ENCODE measurements at regions of chr3 and their contacts with region 1.

Region 1: GRCh38 chr3:33915791-33916546 is 117.5 kb downstream of the PDCD6IP start:
- DNase-seq: no peak
- ATAC-seq: no peak
- H3K4me3 ChIP-seq: no peak overlapping the region
- H3K4me3 Mint-ChIP-seq: no peak overlapping the region
- H3K27ac ChIP-seq: no peak overlapping the region
- H3K27ac Mint-ChIP-seq: no peak overlapping the region
- H3K4me1 ChIP-seq: no peaks in the 10 kb centered on the region
- H3K4me1 Mint-ChIP-seq: peaks cover 3% of the 10 kb centered on the region
- H3K27me3 ChIP-seq: no peaks in the 10 kb centered on the region
- H3K27me3 Mint-ChIP-seq: peaks cover 9% of the 10 kb centered on the region
- CTCF ChIP-seq: no peak

Region 2: DNA sequence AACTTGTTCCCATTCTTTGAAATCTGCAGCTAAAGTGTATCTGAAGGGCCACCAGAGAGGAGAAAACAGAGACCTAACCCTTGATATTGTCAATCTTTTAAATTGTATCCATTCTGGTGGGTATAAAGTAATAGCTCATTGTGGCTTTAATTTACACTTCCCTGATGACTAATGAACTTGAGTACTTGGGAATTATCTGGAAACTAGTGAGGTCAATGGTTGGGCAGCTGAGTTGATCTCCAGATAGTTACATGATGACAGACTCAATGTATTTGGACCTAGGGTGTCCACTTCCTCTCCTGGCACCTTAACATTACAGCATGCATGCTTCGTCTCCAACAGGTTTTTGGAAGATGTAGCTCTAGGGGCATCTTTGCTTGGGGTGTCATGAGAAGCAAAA is 77.7 kb after region 1 on chr3:
- CTCF ChIA-PET with region 1: no interaction called
- POLR2A ChIA-PET with region 1: no interaction called
- intact Hi-C with region 1: no loop called
- DNase-seq: no peak
- ATAC-seq: no peak
- H3K4me3 ChIP-seq: no peak overlapping the region
- H3K4me3 Mint-ChIP-seq: no peak overlapping the region
- H3K27ac ChIP-seq: no peak overlapping the region
- H3K27ac Mint-ChIP-seq: no peak overlapping the region
- H3K4me1 ChIP-seq: no peaks in the 10 kb centered on the region
- H3K4me1 Mint-ChIP-seq: no peaks in the 10 kb centered on the region
- H3K27me3 ChIP-seq: no peaks in the 10 kb centered on the region
- H3K27me3 Mint-ChIP-seq: peaks cover 12% of the 10 kb centered on the region
- CTCF ChIP-seq: no peak

Region 3: DNA sequence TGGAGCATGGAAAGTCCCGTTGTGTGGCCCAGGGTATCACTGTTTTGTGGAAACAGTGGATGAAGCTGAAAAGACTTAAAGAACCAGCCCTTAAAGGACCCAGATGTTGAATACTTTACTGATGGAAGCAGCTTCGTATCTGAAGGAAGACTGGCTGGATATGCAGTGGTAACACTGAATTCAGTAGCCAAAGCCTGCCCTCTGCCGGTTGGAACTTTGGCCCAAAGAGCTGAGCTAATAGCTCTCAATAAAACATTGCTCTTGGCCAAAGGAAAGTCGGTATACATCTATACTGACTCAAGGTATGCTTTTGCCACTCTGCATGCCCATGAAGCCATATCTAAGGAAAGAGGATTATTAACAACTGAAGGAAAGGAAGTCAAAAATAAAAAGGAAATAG is 767.9 kb after region 1 on chr3:
- CTCF ChIA-PET with region 1: interaction called, 12 read pairs
- POLR2A ChIA-PET with region 1: no interaction called
- intact Hi-C with region 1: no loop called
- DNase-seq: peak; percentile 41
- ATAC-seq: no peak
- H3K4me3 ChIP-seq: no peak overlapping the region
- H3K4me3 Mint-ChIP-seq: no peak overlapping the region
- H3K27ac ChIP-seq: no peak overlapping the region
- H3K27ac Mint-ChIP-seq: no peak overlapping the region
- H3K4me1 ChIP-seq: no peaks in the 10 kb centered on the region
- H3K4me1 Mint-ChIP-seq: no peaks in the 10 kb centered on the region
- H3K27me3 ChIP-seq: no peaks in the 10 kb centered on the region
- H3K27me3 Mint-ChIP-seq: no peaks in the 10 kb centered on the region
- CTCF ChIP-seq: peak; percentile 36

Measured in B cell (primary cell).